ENCODE measurements at regions of chr9 and their contacts with region 1.

Region 1: GRCh38 chr9:13088720-13089427 is 190.6 kb downstream of the MPDZ start:
- DNase-seq: no peak
- ATAC-seq: peak; percentile 52

Region 2: DNA sequence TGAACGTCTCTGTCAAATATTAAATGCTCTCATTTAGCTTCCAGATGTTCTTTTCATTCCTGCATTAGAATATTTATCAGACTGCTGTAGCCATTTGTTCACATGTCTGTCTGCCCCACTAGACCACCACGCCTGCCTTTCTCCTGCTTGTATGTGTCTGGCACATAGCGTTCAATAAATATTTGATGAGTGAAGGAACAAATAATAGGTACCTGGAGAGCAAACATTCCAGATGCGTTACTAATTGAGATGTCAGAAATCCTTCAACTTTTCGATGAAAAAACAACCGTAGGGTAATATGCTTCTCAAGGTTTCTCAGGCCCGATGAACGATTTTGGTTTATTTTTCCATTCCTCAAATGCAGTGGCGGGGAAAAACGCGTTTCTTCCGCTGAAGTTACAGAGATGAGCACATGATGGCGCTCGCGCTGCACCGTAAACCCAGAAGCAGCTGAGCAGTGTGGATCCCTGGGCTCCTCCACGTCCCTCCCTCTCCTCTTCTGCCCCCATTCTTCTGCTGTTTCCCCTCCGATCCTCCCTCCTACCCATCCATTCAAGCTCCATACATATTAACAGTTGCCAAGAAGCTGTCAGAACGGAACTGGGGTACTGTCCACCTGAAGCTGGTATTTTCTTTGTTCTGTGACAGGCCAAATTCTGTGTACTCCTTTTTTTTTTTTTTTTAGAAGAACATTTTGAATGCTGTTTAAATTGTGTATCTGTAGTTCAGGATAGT is 54.7 kb before region 1 on chr9:
- intact Hi-C with region 1: loop called (anchors 2 kb)
- DNase-seq: peak; percentile 73
- ATAC-seq: peak; percentile 81

Region 3: GRCh38 chr9:13049223-13049622 is 39.7 kb before region 1 on chr9:
- intact Hi-C with region 1: no loop called
- DNase-seq: no peak
- ATAC-seq: no peak

Measured in Right ventricle myocardium inferior (tissue), 1 donor.